ENCODE measurements at regions of chr14 and their contacts with region 1.

Region 1: GRCh38 chr14:90534091-90534837 is 137.4 kb downstream of the CALM1 start:
- DNase-seq: peak in 4 of 5 donors; percentile 52 to 65 (median 56)
- ATAC-seq: peak in 3 of 4 donors; percentile 27 to 56 (median 47)
- H3K4me3 ChIP-seq: no peak overlapping the region
- H3K27ac ChIP-seq: peak overlapping the region in 11 of 12 donors; percentile 24 to 90 (median 75)
- H3K4me1 ChIP-seq: peaks cover 0 to 42% (median 34%) of the 10 kb centered on the region in 12 donors
- H3K27me3 ChIP-seq: no peaks in the 10 kb centered on the region
- CTCF ChIP-seq: no peak
- POLR2A ChIP-seq: no peak

Region 2: DNA sequence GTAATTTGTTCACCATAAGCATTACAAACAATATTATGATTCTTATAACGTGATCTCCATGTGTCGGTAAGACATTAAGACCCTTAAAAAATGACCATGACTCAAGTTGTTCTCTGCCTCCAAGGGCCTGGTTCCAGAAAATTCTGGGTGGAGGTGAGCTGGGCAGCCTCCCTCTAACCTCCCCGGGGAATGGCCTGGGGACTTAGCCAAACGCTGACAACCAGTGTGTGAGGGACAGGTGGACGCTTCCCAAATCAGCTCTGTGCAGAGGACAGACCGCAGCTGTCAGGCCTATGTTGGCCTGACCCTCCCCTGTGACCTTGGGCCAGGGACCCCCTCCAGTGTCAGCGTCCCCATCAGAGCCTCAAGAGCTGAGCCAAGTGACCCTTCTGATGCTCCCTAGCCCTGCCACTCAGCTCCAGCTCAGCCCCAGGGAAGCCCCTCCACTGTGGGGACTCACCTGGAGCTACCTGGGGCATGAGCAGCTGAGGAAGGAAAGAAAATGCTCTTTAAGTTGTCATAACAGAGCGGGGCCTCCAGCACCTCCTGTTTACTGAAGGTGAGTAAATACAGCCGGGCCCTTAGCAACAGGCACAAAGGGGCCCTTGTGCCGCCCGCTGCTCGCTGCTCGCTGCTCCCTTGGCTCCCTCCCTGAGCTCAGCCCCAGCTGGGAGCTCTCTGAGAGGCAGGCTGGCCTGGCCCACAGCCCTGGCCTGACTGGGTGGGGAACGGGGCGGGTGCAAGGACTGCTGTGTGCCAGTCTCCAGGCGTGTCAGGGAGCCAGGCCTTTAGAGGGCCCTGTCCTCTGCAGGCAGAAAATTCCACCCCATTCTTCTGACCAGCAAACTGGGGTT is 20.9 kb before region 1 on chr14:
- intact Hi-C with region 1: no loop called
- DNase-seq: peak; percentile 71 to 93 (median 86)
- ATAC-seq: peak; percentile 93 to 95 (median 93)
- H3K4me3 ChIP-seq: no peak overlapping the region
- H3K27ac ChIP-seq: peak overlapping the region; percentile 27 to 94 (median 80)
- H3K4me1 ChIP-seq: peaks cover 3 to 40% (median 27%) of the 10 kb centered on the region in 12 donors
- H3K27me3 ChIP-seq: no peaks in the 10 kb centered on the region
- CTCF ChIP-seq: peak in 1 of 12 donors; percentile 13
- POLR2A ChIP-seq: no peak

Region 3: GRCh38 chr14:90611936-90612335 is 77.7 kb after region 1 on chr14:
- intact Hi-C with region 1: loop called in 1 of 10 experiments (anchors 10 kb)
- DNase-seq: no peak
- ATAC-seq: peak in 1 of 4 donors; percentile 41
- H3K4me3 ChIP-seq: no peak overlapping the region
- H3K27ac ChIP-seq: peak overlapping the region in 10 of 12 donors; percentile 8 to 77 (median 54)
- H3K4me1 ChIP-seq: peaks cover 0 to 70% (median 42%) of the 10 kb centered on the region in 12 donors
- H3K27me3 ChIP-seq: no peaks in the 10 kb centered on the region
- CTCF ChIP-seq: no peak
- POLR2A ChIP-seq: no peak